ENCODE measurements at regions of chr5 and their contacts with region 1.

Region 1: GRCh38 chr5:151239237-151239861 is 13.6 kb upstream of the GM2A start:
- DNase-seq: peak; percentile 81 to 91 (median 89)
- H3K4me3 ChIP-seq: peak overlapping the region; percentile 27
- H3K27ac ChIP-seq: peak overlapping the region in 1 of 2 donors; percentile 52
- H3K4me1 ChIP-seq: peaks cover 7% of the 10 kb centered on the region
- H3K27me3 ChIP-seq: no peaks in the 10 kb centered on the region
- CTCF ChIP-seq: peak; percentile 61 to 85 (median 78)
- EP300 ChIP-seq: no peak
- POLR2A ChIP-seq: no peak

Region 2: GRCh38 chr5:151137067-151137825 is 102.1 kb before region 1 on chr5:
- intact Hi-C with region 1: no loop called
- DNase-seq: no peak
- H3K4me3 ChIP-seq: no peak overlapping the region
- H3K27ac ChIP-seq: no peak overlapping the region
- H3K4me1 ChIP-seq: peaks cover 8% of the 10 kb centered on the region
- H3K27me3 ChIP-seq: no peaks in the 10 kb centered on the region
- CTCF ChIP-seq: no peak
- EP300 ChIP-seq: no peak
- POLR2A ChIP-seq: no peak

Region 3: GRCh38 chr5:151164686-151165392 is 74.5 kb before region 1 on chr5:
- intact Hi-C with region 1: loop called in 2 of 4 experiments (anchors 2 to 10 kb)
- DNase-seq: peak; percentile 69 to 85 (median 82)
- H3K4me3 ChIP-seq: no peak overlapping the region
- H3K27ac ChIP-seq: no peak overlapping the region
- H3K4me1 ChIP-seq: peaks cover 8% of the 10 kb centered on the region
- H3K27me3 ChIP-seq: no peaks in the 10 kb centered on the region
- CTCF ChIP-seq: peak; percentile 56 to 93 (median 85)
- EP300 ChIP-seq: no peak
- POLR2A ChIP-seq: no peak

Region 4: DNA sequence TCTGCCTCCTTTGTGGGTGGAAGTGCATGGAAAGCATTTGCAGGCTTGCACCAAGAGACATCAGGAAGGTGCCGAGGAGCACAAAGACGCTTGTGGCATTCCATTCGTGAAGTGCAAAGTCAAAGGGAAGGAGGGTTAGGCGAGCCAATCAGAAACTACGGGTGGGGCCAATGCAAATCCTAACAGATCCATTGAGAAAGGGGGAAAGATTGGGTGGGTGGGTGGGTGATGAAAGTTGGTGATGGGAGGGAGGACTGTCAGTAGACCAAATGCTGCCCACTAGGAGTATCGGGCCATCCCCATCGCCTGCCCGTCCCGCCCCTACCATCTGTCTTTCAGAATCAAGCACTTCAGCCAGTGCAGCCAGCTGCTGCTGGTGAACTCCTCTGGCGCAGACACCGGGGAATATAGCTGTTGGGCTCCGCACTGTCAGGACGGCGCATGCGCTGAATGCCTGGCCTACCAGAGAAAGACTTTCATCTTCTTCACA is 64.7 kb before region 1 on chr5:
- intact Hi-C with region 1: loop called in 1 of 4 experiments (anchors 10 kb)
- DNase-seq: peak in 4 of 5 donors; percentile 39 to 62 (median 52)
- H3K4me3 ChIP-seq: no peak overlapping the region
- H3K27ac ChIP-seq: no peak overlapping the region
- H3K4me1 ChIP-seq: no peaks in the 10 kb centered on the region
- H3K27me3 ChIP-seq: no peaks in the 10 kb centered on the region
- CTCF ChIP-seq: no peak
- EP300 ChIP-seq: no peak
- POLR2A ChIP-seq: no peak

Measured in ovary (tissue), 10 donors.